PC-9 (cell line): ENCODE measurements at regions of chr14 and their contacts with region 1.

Region 1: GRCh38 chr14:103871596-103872480 is 24.5 kb upstream of the PPP1R13B start:
- DNase-seq: peak in 1 of 2 experiments; percentile 74
- H3K4me3 ChIP-seq: no peak overlapping the region
- H3K27ac ChIP-seq: no peak overlapping the region
- H3K4me1 ChIP-seq: no peaks in the 10 kb centered on the region
- H3K27me3 ChIP-seq: no peaks in the 10 kb centered on the region
- CTCF ChIP-seq: no peak

Region 2: DNA sequence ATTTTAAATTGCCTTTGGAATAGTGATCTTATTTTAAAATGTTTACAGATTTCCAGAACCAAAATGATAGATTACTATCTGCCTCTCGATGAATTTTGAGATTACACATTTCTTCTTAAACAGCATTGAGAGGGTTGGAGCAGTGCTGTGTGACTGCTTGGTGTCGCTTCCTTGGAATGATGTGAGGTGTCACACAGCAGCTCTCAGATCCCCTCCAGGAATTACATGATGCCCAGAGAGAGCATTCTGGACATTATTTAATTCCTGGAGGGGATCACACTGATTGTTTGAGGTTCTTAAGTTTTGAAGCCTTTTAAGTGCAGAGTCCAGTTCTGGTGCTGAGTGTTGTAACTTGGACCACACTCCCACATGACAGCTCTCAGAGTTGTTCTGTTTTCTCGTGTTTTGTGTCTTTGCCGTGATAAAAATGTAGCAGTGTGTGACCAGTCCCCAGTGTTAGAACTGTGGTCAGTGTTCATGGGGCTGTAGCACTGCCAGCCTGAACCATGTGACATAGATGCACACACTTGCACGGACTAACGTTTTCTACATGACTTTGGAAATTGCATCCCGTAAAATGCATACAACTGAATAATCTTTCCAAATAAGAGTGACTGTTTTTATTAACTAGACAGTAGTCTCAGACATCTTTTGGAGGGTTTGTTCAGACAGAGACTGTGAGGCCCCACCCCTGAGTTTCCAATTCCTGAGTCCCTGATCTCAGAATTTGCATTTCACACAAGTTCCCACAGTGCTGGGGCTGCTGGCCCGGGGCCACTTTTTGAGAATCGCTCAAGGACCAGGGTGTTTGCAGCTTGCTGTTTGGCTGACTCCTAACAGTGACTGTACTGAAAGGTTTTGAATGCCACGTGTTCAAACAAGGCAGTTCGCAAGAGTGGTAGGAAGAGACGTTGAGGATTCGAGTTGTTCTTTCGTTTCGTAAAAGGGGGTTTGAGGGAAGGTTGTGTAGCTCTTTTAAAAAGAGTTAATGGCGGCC is 182.6 kb before region 1 on chr14:
- CTCF ChIA-PET with region 1: no interaction called
- POLR2A ChIA-PET with region 1: no interaction called
- intact Hi-C with region 1: no loop called
- DNase-seq: no peak
- H3K4me3 ChIP-seq: no peak overlapping the region
- H3K27ac ChIP-seq: no peak overlapping the region
- H3K4me1 ChIP-seq: peaks cover 15% of the 10 kb centered on the region
- H3K27me3 ChIP-seq: no peaks in the 10 kb centered on the region
- CTCF ChIP-seq: no peak

Region 3: GRCh38 chr14:103846543-103847450 is 25.0 kb before region 1 on chr14:
- CTCF ChIA-PET with region 1: no interaction called
- POLR2A ChIA-PET with region 1: interaction called, 13 read pairs
- intact Hi-C with region 1: no loop called
- DNase-seq: peak in 1 of 2 experiments; percentile 19
- H3K4me3 ChIP-seq: peak overlapping the region; percentile 85
- H3K27ac ChIP-seq: no peak overlapping the region
- H3K4me1 ChIP-seq: peaks cover 9% of the 10 kb centered on the region
- H3K27me3 ChIP-seq: no peaks in the 10 kb centered on the region
- CTCF ChIP-seq: no peak

Region 4: GRCh38 chr14:104399432-104400151 is 527.8 kb after region 1 on chr14:
- CTCF ChIA-PET with region 1: no interaction called
- POLR2A ChIA-PET with region 1: no interaction called
- intact Hi-C with region 1: no loop called
- DNase-seq: no peak
- H3K4me3 ChIP-seq: no peak overlapping the region
- H3K27ac ChIP-seq: no peak overlapping the region
- H3K4me1 ChIP-seq: no peaks in the 10 kb centered on the region
- H3K27me3 ChIP-seq: peaks cover 98% of the 10 kb centered on the region
- CTCF ChIP-seq: no peak